CD8-positive, alpha-beta memory T cell (primary cell): ENCODE measurements at regions of chr1 and their contacts with region 1.

Region 1: DNA sequence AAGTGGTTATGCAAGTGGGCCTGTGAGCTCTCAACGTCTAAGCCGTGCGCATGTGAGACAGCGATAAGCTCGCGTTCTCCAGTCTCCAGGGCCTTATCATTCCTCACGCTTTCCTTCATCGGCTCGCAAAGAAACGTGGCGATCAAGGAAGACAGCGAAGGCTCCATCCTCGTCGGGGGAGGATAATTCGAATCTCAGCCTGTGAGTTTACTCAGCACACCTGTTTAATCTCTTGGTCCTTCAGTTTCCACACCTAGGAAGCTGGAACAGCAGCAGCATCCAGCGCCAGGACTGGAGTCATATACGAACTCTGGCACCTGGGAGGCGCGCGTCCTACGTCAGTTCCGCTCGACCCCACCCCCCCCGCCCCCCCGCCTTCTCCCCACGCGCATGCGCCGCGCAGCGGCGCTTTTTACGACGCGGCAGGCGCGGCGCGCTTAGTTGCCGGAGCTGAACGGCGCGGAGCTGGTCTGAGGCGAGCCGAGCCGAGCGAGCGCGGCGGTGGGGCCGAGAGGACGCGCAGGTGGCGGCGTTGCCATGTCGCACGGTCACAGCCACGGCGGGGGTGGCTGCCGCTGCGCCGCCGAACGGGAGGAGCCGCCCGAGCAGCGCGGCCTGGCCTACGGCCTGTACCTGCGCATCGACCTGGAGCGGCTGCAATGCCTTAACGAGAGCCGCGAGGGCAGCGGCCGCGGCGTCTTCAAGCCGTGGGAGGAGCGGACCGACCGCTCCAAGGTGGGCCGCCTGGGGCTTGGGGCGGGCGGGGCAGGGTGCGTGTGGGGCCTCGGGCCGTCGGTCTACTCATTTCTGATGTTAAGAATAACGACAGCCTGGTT is at the start of gene PITHD1:
- DNase-seq: peak; percentile 72 to 89 (median 83)
- H3K4me3 ChIP-seq: peak within 1 kb of the TSS; percentile 98
- H3K4me3 Mint-ChIP-seq: peak within 1 kb of the TSS; percentile 90 to 99 (median 95)
- H3K27ac ChIP-seq: peak within 1 kb of the TSS; percentile 91
- H3K27ac Mint-ChIP-seq: peak within 1 kb of the TSS; percentile 95 to 99 (median 98)
- H3K4me1 ChIP-seq: peaks cover 26% of the 10 kb centered on the region
- H3K4me1 Mint-ChIP-seq: peaks cover 32 to 55% (median 51%) of the 10 kb centered on the region in 3 donors
- H3K27me3 ChIP-seq: no peaks in the 10 kb centered on the region
- H3K27me3 Mint-ChIP-seq: no peaks in the 10 kb centered on the region
- total RNA-seq, gene PITHD1: 105 TPM

Region 2: DNA sequence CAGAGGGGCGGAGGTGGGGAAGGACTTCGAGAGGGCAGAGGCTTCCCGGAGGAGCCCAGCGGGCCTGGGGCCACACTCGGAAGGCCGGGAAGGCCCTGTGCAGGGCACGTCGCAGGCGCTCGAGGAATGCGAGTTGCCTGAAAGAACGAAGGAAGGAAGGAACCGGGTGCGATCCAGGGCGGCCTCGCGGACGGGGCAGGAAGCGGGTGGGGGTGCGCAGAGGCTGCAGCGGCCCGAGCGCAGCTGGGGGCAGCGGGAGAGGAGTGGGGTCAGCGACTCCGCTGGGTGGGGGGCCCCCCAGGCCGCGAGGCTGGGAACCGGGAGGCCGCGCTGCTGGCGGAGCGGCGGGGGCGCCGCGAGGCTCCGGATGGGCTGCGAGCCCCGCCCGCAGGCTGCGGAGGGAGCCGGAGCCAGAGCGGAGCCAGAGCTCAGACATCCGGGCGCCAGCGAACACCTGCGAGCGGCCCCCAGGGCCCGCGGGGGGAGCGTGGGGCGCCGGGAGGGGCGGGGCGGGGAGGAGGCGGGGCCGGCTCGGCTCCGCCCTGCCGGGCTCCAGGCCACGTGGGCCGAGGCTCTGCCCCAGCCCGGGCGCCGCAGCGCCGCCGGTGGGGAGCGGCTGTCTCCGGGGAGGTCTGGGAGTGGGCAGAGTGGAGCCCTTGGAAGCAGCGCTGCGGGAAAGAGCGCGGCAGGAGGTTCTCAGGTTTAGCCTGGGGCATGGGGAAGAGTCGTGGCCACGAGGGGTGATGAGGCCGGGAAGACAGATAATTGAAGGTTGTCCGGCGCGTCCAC is 223.5 kb before region 1 on chr1:
- CTCF ChIA-PET with region 1: no interaction called
- POLR2A ChIA-PET with region 1: no interaction called
- DNase-seq: peak; percentile 78 to 89 (median 81)
- H3K4me3 ChIP-seq: peak overlapping the region; percentile 77
- H3K4me3 Mint-ChIP-seq: peak overlapping the region; percentile 82 to 94 (median 88)
- H3K27ac ChIP-seq: peak overlapping the region; percentile 85
- H3K27ac Mint-ChIP-seq: peak overlapping the region; percentile 50 to 97 (median 92)
- H3K4me1 ChIP-seq: peaks cover 41% of the 10 kb centered on the region
- H3K4me1 Mint-ChIP-seq: peaks cover 43 to 60% (median 54%) of the 10 kb centered on the region in 3 donors
- H3K27me3 ChIP-seq: no peaks in the 10 kb centered on the region
- H3K27me3 Mint-ChIP-seq: peaks cover 0 to 5% of the 10 kb centered on the region in 2 donors

Region 3: DNA sequence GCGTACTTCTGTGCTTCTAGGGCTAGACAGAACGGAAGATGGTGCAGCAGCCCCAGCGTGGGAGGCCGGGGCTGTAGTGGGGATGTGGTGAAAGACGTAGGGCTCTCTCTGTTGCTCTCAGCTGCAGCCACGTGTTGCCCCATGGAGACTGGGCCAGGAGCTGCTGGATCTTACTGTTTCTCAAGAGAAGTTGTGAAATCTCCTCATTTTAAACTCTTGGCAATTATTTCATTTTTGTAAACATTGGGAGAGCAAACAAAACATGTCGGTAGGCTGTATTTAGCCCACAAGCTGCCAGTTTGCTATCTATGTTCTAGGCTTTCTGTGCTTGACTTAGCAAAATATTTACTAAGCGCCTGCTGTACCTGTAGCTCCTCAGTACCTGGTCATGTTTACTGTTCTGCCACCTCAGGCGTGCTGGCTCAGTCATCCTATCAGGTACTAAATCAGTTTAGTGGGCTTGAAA is 50.8 kb before region 1 on chr1:
- CTCF ChIA-PET with region 1: no interaction called
- POLR2A ChIA-PET with region 1: no interaction called
- DNase-seq: no peak
- H3K4me3 ChIP-seq: no peak overlapping the region
- H3K4me3 Mint-ChIP-seq: no peak overlapping the region
- H3K27ac ChIP-seq: no peak overlapping the region
- H3K27ac Mint-ChIP-seq: peak overlapping the region in 2 of 8 donors; percentile 16 to 26
- H3K4me1 ChIP-seq: no peaks in the 10 kb centered on the region
- H3K4me1 Mint-ChIP-seq: no peaks in the 10 kb centered on the region
- H3K27me3 ChIP-seq: no peaks in the 10 kb centered on the region
- H3K27me3 Mint-ChIP-seq: no peaks in the 10 kb centered on the region

Region 4: DNA sequence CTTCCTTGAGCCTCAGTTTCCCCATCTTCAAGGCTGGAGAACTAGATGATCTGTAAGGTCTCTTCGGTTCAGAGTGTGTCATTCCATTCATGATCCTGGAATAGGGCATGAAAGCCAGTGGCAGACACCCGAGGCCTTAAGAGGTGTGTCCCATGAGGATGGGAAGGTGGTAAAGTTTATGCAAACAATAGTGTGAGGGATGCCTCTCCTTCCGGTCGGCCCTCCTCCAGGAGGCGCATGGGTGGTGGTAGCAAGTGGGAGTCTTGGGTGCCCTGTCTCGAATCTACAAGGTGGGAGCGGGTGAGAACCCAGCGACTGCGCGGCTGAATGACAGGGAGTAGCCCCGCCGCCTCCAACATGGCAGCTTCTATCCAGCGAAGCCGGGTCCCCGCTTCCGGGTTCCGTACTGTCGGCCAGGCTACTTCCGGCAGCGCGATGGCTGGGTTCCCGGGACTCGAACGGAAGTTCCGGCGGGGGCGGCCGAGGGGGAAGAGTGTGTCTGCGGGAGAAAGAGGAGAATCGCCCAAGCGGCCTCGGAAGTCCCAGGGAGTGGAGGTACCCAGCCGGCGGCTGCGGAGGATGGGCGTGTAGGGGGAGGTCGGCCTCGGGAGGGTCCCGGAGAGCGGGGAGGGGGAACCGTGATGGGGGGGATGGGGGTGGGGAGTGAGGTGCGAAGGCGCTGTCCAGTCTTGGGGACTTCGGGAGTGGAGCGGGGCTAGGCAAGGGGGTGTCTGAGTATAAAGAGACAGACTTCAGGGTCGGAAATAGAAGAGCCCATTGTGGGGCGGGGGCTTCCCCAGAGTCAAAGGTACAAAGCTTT is 12.7 kb after region 1 on chr1 and contains the start of gene LYPLA2:
- CTCF ChIA-PET with region 1: interaction called, 13 read pairs
- POLR2A ChIA-PET with region 1: interaction called, 11 read pairs
- DNase-seq: peak; percentile 78 to 91 (median 84)
- H3K4me3 ChIP-seq: peak within 1 kb of the TSS; percentile 95
- H3K4me3 Mint-ChIP-seq: peak within 1 kb of the TSS; percentile 90 to 98 (median 94)
- H3K27ac ChIP-seq: peak within 1 kb of the TSS; percentile 83
- H3K27ac Mint-ChIP-seq: peak within 1 kb of the TSS; percentile 87 to 99 (median 96)
- H3K4me1 ChIP-seq: peaks cover 29% of the 10 kb centered on the region
- H3K4me1 Mint-ChIP-seq: peaks cover 18 to 32% (median 24%) of the 10 kb centered on the region in 3 donors
- H3K27me3 ChIP-seq: no peaks in the 10 kb centered on the region
- H3K27me3 Mint-ChIP-seq: no peaks in the 10 kb centered on the region
- total RNA-seq, gene LYPLA2: 99.9 to 100 TPM

Region 5: DNA sequence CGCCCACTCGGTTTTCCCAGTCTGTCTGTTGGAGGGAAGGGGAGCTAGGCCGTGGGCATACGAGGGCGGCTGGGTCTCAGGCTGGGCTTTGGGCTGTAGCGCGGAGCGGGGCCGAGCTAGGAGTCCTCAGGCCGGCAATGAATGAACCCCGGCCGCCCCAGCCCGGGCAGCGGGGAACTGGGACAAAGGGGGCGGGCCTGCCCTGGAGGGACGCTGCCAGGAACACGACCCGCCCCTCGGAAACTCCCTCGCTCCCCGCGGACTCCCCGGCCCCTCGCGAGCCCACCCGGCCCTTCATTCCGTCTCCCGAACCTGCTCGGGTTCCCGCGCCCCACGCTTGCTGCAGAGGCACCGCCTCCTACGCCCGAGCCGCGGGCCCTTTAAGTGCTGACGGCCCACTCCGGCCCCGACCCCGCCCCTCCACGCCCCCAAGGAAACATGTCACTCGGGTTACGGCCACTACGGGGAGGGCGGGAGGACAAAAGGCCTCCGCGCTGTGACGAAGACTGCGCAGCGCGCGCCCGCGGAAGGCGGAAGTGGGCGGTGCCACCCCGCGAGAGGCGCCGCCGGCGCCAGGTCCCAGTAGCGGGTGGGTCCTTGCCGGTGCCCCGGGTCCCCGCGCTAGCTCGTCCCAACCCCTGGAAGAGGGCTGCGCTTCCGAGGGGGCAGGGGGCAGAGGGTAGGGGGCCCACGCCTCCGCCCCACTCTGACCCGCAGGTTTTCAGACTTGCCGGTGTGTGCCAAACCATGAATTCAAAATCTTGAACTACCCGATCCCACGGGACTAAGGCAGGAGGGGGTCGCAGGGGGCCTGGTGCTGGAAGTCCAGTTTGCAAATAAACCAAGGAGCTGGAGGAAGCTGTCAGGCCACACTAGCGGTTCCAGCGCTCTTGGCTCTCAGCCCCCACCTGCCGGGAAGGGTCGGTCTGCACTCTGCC is 22.5 kb after region 1 on chr1 and contains the start of gene GALE:
- CTCF ChIA-PET with region 1: interaction called, 4 read pairs
- POLR2A ChIA-PET with region 1: interaction called, 10 read pairs
- DNase-seq: peak; percentile 92 to 98 (median 95)
- H3K4me3 ChIP-seq: peak within 1 kb of the TSS; percentile 70
- H3K4me3 Mint-ChIP-seq: peak within 1 kb of the TSS; percentile 85 to 97 (median 91)
- H3K27ac ChIP-seq: peak within 1 kb of the TSS; percentile 85
- H3K27ac Mint-ChIP-seq: peak within 1 kb of the TSS; percentile 84 to 96 (median 91)
- H3K4me1 ChIP-seq: peaks cover 20% of the 10 kb centered on the region
- H3K4me1 Mint-ChIP-seq: peaks cover 14 to 24% (median 19%) of the 10 kb centered on the region in 3 donors
- H3K27me3 ChIP-seq: no peaks in the 10 kb centered on the region
- H3K27me3 Mint-ChIP-seq: no peaks in the 10 kb centered on the region
- total RNA-seq, gene GALE: 50.5 to 55.3 TPM